ENCODE measurements at regions of chr6 and their contacts with region 1.

Region 1: DNA sequence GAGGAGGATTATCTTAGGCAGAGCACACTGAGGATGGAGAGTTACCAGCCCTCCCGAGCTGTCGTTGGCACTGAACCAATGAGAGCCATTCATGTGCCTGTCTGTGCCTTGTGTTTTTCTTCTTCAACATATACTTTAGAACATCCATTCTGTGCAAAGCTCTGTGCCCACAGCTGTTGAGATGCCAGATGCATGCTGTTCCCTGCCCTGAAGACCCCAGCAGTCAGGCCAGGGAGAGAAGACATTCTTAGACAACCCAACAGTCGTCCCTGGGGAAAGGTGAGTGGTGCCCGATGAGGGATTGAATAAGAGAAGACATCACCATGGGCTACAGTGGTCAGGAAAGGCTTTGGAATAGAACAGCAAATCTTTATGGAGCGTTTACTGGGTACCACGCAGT is 114.1 kb downstream of the NRN1 start:
- DNase-seq: no peak
- ATAC-seq: no peak
- H3K4me3 ChIP-seq: peak overlapping the region; percentile 39
- H3K4me3 Mint-ChIP-seq: no peak overlapping the region
- H3K27ac ChIP-seq: peak overlapping the region in 1 of 2 donors; percentile 13
- H3K27ac Mint-ChIP-seq: peak overlapping the region; percentile 93
- H3K4me1 ChIP-seq: peaks cover 4% of the 10 kb centered on the region
- H3K4me1 Mint-ChIP-seq: peaks cover 6% of the 10 kb centered on the region
- H3K27me3 ChIP-seq: no peaks in the 10 kb centered on the region
- H3K27me3 Mint-ChIP-seq: no peaks in the 10 kb centered on the region
- CTCF ChIP-seq: no peak

Region 2: GRCh38 chr6:5851261-5851757 is 41.4 kb before region 1 on chr6:
- CTCF ChIA-PET with region 1: no interaction called
- POLR2A ChIA-PET with region 1: interaction called, 3 read pairs
- intact Hi-C with region 1: loop called in 1 of 2 experiments (anchors 5 kb)
- DNase-seq: peak; percentile 40 to 84 (median 64)
- ATAC-seq: peak; percentile 99
- H3K4me3 ChIP-seq: peak overlapping the region; percentile 48
- H3K4me3 Mint-ChIP-seq: peak overlapping the region; percentile 89
- H3K27ac ChIP-seq: no peak overlapping the region
- H3K27ac Mint-ChIP-seq: peak overlapping the region; percentile 71
- H3K4me1 ChIP-seq: peaks cover 15% of the 10 kb centered on the region
- H3K4me1 Mint-ChIP-seq: peaks cover 5% of the 10 kb centered on the region
- H3K27me3 ChIP-seq: no peaks in the 10 kb centered on the region
- H3K27me3 Mint-ChIP-seq: peaks cover 4% of the 10 kb centered on the region
- CTCF ChIP-seq: no peak